Natural killer cell (primary cell): ENCODE measurements at regions of chr12 and their contacts with region 1.

Region 1: GRCh38 chr12:68240597-68241374 is 12.6 kb downstream of the IL22 start:
- DNase-seq: peak; percentile 37 to 75
- ATAC-seq: peak; percentile 95 to 98 (median 95)
- H3K4me3 ChIP-seq: no peak overlapping the region
- H3K4me3 Mint-ChIP-seq: peak overlapping the region; percentile 72
- H3K27ac ChIP-seq: peak overlapping the region; percentile 74
- H3K27ac Mint-ChIP-seq: peak overlapping the region; percentile 90 to 93
- H3K4me1 ChIP-seq: peaks cover 25% of the 10 kb centered on the region
- H3K4me1 Mint-ChIP-seq: peaks cover 32% of the 10 kb centered on the region in 2 donors
- H3K27me3 ChIP-seq: no peaks in the 10 kb centered on the region
- H3K27me3 Mint-ChIP-seq: no peaks in the 10 kb centered on the region
- CTCF ChIP-seq: no peak

Region 2: DNA sequence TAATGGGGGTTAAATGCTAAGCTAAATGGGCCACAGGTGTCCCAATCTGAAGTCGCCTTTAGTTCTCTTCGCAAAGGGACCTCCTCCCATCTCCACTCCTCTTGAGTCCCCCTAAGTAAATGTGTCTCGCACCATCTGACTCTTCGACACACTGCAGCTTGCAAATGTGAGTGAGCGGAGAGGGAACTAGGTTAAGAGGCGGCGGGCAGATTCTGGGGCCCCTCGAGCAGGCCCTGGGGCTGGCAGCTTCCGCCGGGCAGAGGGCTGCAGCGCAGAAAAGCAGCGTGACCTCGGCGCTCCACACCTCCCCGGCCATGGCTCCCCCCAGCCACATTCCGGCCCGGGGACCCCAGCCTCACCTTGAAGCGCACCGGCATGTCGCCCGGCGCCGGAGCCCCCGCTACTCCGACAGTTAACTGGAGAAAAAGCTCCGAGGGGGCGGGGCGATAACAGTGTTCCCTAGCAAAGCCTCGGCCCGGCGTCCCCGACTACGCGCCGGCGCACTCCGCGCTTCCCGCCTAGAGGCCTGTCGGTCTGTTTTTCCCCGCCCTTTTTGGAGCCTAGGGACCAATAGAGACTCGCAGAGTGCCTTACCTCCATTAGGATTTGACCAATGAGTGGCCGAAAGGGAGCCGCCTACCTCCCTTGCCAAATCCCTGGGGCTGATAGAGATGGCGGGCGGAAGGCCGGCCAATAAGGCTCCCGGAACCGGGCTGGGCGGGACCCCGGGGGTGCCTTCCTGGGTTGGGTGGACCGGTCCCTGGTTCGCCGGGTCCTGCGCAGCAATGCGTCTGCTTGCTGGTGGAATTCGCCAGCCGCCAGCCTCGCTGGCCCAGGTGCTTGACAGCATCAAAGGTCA is 91.3 kb after region 1 on chr12 and contains the start of gene MDM1:
- intact Hi-C with region 1: loop called (anchors 5 kb)
- DNase-seq: peak; percentile 93 to 98
- ATAC-seq: peak; percentile 96 to 98 (median 96)
- H3K4me3 ChIP-seq: peak within 1 kb of the TSS; percentile 72
- H3K4me3 Mint-ChIP-seq: peak within 1 kb of the TSS; percentile 89
- H3K27ac ChIP-seq: peak within 1 kb of the TSS; percentile 71
- H3K27ac Mint-ChIP-seq: peak within 1 kb of the TSS; percentile 86 to 91
- H3K4me1 ChIP-seq: peaks cover 12% of the 10 kb centered on the region
- H3K4me1 Mint-ChIP-seq: peaks cover 44 to 57% of the 10 kb centered on the region in 2 donors
- H3K27me3 ChIP-seq: no peaks in the 10 kb centered on the region
- H3K27me3 Mint-ChIP-seq: no peaks in the 10 kb centered on the region
- CTCF ChIP-seq: no peak
- total RNA-seq, gene MDM1: 21.3 to 36.2 (median 26.5) TPM